ENCODE measurements at regions of chr10 and their contacts with region 1.

Region 1: DNA sequence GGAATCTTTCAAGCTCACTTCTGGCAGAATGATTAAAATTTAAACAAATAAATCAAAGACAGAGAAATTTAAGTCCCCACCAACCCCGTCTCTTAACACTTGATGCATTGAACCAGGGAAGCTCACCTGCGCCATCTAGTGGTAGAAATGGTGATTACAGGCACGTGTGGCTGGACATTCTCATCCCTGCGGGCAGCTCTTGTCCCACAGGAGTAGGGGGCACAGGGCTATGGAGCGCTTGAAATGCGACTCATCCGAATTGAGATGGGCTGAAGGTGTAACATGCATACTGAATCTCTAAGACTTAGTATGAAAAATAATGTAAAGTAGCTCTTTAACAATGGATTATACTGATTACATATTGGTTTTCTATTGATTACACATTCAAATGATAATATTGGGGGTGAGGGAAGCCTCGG is 24.8 kb upstream of the SLIT1 start:
- DNase-seq: peak; percentile 85
- H3K4me3 ChIP-seq: no peak overlapping the region
- H3K27ac ChIP-seq: no peak overlapping the region
- H3K4me1 ChIP-seq: no peaks in the 10 kb centered on the region
- H3K27me3 ChIP-seq: no peaks in the 10 kb centered on the region
- CTCF ChIP-seq: peak; percentile 88 to 91
- POLR2A ChIP-seq: no peak

Region 2: GRCh38 chr10:96743988-96744585 is 466.5 kb before region 1 on chr10:
- CTCF ChIA-PET with region 1: no interaction called
- POLR2A ChIA-PET with region 1: no interaction called
- dilution Hi-C with region 1: no loop called
- intact Hi-C with region 1: no loop called
- DNase-seq: no peak
- H3K4me3 ChIP-seq: no peak overlapping the region
- H3K27ac ChIP-seq: no peak overlapping the region
- H3K4me1 ChIP-seq: no peaks in the 10 kb centered on the region
- H3K27me3 ChIP-seq: no peaks in the 10 kb centered on the region
- CTCF ChIP-seq: peak in 1 of 2 donors; percentile 3
- POLR2A ChIP-seq: no peak

Region 3: GRCh38 chr10:96765406-96766240 is 444.9 kb before region 1 on chr10:
- CTCF ChIA-PET with region 1: interaction called, 3 read pairs
- POLR2A ChIA-PET with region 1: no interaction called
- dilution Hi-C with region 1: no loop called
- intact Hi-C with region 1: loop called (anchors 1 kb)
- DNase-seq: peak; percentile 38
- H3K4me3 ChIP-seq: no peak overlapping the region
- H3K27ac ChIP-seq: no peak overlapping the region
- H3K4me1 ChIP-seq: no peaks in the 10 kb centered on the region
- H3K27me3 ChIP-seq: no peaks in the 10 kb centered on the region
- CTCF ChIP-seq: peak; percentile 79 to 89
- POLR2A ChIP-seq: no peak

Region 4: GRCh38 chr10:96935148-96935547 is 275.4 kb before region 1 on chr10:
- CTCF ChIA-PET with region 1: no interaction called
- POLR2A ChIA-PET with region 1: no interaction called
- dilution Hi-C with region 1: no loop called
- intact Hi-C with region 1: no loop called
- DNase-seq: no peak
- H3K4me3 ChIP-seq: no peak overlapping the region
- H3K27ac ChIP-seq: no peak overlapping the region
- H3K4me1 ChIP-seq: no peaks in the 10 kb centered on the region
- H3K27me3 ChIP-seq: no peaks in the 10 kb centered on the region
- CTCF ChIP-seq: no peak
- POLR2A ChIP-seq: no peak

Region 5: GRCh38 chr10:97037365-97038361 is 172.9 kb before region 1 on chr10:
- CTCF ChIA-PET with region 1: interaction called, 74 read pairs
- POLR2A ChIA-PET with region 1: no interaction called
- dilution Hi-C with region 1: no loop called
- intact Hi-C with region 1: loop called (anchors 1 kb)
- DNase-seq: peak; percentile 82
- H3K4me3 ChIP-seq: peak overlapping the region in 2 of 3 experiments; percentile 20 to 35
- H3K27ac ChIP-seq: no peak overlapping the region
- H3K4me1 ChIP-seq: peaks cover 5% of the 10 kb centered on the region
- H3K27me3 ChIP-seq: peaks cover 0 to 2% of the 10 kb centered on the region in 2 experiments
- CTCF ChIP-seq: peak; percentile 81 to 87
- POLR2A ChIP-seq: no peak

Region 6: DNA sequence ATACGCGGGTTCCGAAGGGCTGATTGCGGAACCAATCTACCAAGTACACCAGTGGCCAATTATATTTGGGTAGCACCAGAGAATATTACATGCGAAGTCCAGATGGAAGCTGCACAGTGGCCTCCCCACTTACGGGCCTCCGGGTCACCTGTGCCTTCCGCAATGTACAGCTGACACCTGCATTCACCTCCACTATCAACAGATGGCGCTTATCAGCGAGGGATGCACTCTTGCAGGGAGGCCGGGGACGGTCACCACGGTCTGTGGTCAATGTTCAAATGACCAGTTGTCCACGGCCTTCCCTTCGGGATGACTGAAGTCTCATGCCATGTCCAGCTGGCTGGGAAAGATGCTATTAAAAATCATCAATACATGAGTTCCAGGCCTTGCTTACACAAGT is 72.4 kb before region 1 on chr10:
- CTCF ChIA-PET with region 1: interaction called, 7 read pairs
- POLR2A ChIA-PET with region 1: no interaction called
- dilution Hi-C with region 1: no loop called
- intact Hi-C with region 1: loop called (anchors 2 kb)
- DNase-seq: no peak
- H3K4me3 ChIP-seq: no peak overlapping the region
- H3K27ac ChIP-seq: no peak overlapping the region
- H3K4me1 ChIP-seq: no peaks in the 10 kb centered on the region
- H3K27me3 ChIP-seq: peaks cover 22% of the 10 kb centered on the region in 2 experiments
- CTCF ChIP-seq: peak in 1 of 2 donors; percentile 16
- POLR2A ChIP-seq: no peak

Region 7: DNA sequence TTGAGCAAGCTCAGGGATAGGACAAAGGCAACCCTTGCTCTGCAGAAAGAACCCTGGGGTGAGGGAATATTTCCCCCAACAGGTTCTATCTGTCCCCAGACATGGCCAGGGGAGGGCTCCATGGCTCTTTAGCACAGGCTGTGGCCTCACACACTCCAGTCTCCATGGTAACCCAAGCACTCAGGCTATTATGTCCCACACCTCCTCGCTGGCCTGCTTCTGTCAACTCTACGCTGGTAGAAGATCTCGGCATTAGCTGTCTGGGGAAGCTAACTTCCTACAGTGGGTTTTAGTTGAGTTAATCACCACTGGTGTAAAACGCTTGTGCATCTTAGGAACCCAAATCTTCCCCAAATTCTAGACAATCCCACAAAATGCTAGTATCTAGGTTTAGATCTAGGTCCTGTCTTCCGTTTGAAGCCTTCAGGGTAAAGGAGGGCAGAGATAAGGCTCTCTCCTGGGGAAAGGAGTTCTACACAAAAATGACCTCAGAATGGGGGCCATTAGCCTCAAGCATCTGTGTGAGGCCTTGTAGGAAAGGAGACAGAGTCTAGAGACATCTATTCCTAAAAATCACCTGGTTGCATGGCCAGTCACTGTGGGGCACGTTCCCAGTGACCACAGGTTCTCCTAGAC is 11.9 kb after region 1 on chr10:
- CTCF ChIA-PET with region 1: interaction called, 24 read pairs
- POLR2A ChIA-PET with region 1: no interaction called
- dilution Hi-C with region 1: no loop called
- intact Hi-C with region 1: no loop called
- DNase-seq: no peak
- H3K4me3 ChIP-seq: no peak overlapping the region
- H3K27ac ChIP-seq: no peak overlapping the region
- H3K4me1 ChIP-seq: peaks cover 18% of the 10 kb centered on the region
- H3K27me3 ChIP-seq: no peaks in the 10 kb centered on the region
- CTCF ChIP-seq: no peak
- POLR2A ChIP-seq: no peak

Measured in endothelial cell of umbilical vein (primary cell).